BJ (cell line): ENCODE measurements at regions of chr20 and their contacts with region 1.

Region 1: DNA sequence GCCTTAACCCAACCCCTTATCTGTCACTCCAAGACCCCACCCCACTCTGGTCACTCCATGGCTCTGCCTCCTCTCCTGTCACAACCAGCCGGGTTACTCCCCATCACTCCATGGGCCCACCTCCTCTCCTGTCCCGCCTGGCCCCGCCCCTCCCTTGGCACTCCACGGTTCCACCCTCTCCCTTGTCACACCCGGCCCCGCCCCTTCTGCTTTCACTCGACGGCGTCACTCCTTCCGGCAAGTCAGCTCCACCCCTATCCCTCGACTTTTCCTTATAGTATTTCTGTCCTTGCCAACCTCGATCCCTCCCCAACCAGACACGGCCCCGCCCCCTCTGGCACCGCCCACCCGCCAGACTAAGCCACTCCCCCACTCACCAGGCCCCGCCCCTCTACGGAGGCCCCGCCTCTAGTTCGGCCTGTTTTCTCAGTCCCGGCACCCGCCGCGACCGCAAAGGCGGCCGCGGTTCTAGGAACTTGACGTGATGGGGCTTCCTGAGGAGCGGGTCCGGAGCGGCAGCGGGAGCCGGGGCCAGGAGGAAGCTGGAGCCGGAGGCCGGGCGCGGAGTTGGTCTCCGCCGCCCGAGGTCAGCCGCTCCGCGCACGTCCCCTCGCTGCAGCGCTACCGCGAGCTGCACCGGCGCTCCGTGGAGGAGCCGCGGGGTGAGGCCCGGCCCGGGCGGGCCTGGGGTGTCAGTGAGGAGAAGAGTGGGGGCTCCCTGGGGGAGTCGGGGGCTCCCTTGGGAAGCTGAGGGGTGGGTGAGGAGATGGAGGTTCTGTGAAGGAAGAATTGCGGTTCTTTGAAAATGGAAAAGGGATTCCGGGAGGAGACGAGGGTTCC is at the start of gene ACSS2:
- DNase-seq: peak; percentile 86
- H3K4me3 ChIP-seq: peak within 1 kb of the TSS; percentile 78
- H3K27me3 ChIP-seq: no peaks in the 10 kb centered on the region
- CTCF ChIP-seq: no peak
- polyA plus RNA-seq, gene ACSS2: 29.3 and 32.1 TPM in 2 replicates

Region 2: DNA sequence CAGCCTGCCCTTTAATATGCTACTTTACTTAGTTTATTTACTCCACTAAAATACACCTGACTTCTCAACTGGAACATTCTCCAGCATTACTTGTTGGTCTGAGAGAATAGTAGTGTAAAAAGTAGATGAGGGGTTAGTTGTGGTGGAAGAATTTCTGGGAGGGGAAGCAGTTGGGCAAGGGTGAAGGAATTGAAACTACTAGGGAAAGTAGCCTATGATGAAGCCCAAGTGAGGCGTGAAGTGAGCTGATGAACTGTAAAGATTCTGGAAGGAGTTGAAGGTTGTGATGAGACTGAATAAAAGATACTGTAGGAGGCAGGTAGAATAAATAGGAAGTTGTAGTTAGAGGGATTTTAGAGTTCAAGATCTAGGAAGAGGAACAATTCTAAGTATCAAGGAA is 440.8 kb before region 1 on chr20:
- CTCF ChIA-PET with region 1: no interaction called
- POLR2A ChIA-PET with region 1: no interaction called
- DNase-seq: no peak
- H3K4me3 ChIP-seq: no peak overlapping the region
- H3K27me3 ChIP-seq: no peaks in the 10 kb centered on the region
- CTCF ChIP-seq: no peak

Region 3: GRCh38 chr20:34797012-34797995 is 79.1 kb before region 1 on chr20:
- CTCF ChIA-PET with region 1: no interaction called
- POLR2A ChIA-PET with region 1: no interaction called
- DNase-seq: no peak
- H3K4me3 ChIP-seq: no peak overlapping the region
- H3K27me3 ChIP-seq: no peaks in the 10 kb centered on the region
- CTCF ChIP-seq: no peak

Region 4: DNA sequence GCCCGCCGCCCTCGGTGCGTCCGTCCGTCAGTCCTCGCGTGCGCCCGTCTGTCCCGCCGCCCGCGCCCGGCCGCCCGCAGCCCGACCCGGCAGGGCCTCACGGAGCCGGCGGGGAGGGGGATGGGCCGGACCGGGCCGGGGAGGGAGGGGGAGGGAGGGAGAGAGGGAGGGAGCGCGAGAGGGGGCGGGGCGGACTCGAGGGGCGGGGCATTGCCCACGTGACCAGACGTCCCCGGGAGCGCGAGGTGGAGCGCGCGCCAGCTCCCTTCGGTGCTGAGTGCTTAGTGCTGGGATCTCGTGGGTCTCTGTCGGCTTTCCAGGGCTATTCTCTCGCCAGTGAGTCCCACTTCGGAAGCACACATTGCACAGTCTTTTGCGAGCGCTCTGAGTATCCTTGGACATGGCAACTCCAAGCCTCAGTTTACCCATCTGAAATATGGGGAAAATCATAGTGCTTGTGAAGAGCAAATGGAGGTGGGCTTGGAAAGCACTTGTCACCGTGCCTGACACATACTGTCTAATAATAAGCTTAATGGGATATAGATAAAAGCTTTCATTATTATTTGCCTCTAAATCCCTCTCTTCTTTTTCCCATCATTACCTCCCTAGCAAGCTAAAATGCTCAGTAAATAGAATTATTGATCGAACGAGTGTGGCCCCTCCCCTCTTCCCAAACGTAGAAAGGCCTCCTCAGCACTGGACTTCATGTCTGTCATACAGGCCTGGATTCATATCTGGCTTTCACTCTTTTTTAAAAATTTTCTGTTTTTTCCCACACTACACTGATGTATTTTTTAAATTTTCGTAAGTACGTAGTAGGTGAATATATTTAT is 50.6 kb before region 1 on chr20 and contains the start of gene NCOA6:
- CTCF ChIA-PET with region 1: no interaction called
- POLR2A ChIA-PET with region 1: interaction called, 23 read pairs
- DNase-seq: no peak
- H3K4me3 ChIP-seq: peak within 1 kb of the TSS; percentile 83
- H3K27me3 ChIP-seq: no peaks in the 10 kb centered on the region
- CTCF ChIP-seq: no peak
- polyA plus RNA-seq, gene NCOA6: 12.5 and 14.0 TPM in 2 replicates

Region 5: DNA sequence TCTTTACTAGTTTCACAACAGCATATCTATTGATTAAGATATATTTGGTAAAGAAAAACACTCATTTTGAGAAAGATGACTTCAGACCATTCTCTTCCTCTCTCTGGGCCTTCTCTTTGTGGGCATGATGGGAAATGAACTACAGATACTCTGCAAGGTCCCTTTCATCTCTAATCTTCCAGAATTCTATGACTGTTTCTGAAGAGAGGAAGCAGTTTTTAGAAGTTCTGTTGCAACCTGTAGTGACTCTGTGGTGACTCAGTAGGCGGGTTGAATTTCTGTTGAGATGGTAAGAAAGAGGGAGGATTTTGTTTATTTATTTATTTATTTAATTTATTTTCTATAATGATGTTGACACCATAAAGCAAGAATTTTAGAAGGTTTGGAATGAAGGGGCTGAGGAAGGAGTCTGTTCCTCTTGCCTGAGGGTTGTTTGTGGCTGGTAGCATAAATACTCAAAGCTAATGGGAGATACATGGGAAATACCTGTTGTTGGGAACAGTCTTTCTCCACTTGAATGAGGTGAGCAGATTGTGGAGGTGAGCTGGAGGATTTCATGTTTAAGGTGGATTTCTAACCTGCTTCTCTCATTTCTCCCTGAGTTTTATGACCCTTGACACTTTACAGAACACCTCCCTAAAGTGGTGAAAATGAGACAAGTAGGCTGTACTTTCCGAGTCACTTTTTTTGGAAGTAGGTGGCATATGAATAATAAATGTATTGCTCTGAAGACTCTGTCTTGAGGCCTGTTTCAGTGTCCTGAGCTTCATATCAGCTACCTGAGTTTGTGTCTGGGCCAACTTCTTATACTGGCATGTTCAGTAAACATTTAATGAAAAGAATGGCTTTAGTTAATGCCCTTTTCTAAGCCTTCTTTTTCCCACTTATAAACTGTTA is 15.0 kb after region 1 on chr20:
- CTCF ChIA-PET with region 1: interaction called, 6 read pairs
- POLR2A ChIA-PET with region 1: interaction called, 32 read pairs
- DNase-seq: peak; percentile 51
- H3K4me3 ChIP-seq: no peak overlapping the region
- H3K27me3 ChIP-seq: no peaks in the 10 kb centered on the region
- CTCF ChIP-seq: no peak

Region 6: GRCh38 chr20:34955232-34956040 is 79.1 kb after region 1 on chr20 and contains the starts of genes GSS and MYH7B:
- CTCF ChIA-PET with region 1: interaction called, 61 read pairs
- POLR2A ChIA-PET with region 1: no interaction called
- DNase-seq: peak; percentile 68
- H3K4me3 ChIP-seq: peak within 1 kb of the TSS; percentile 82
- H3K27me3 ChIP-seq: no peaks in the 10 kb centered on the region
- CTCF ChIP-seq: peak; percentile 62
- polyA plus RNA-seq, gene GSS: 85.9 and 110 TPM in 2 replicates
- polyA plus RNA-seq, gene MYH7B: 0.01 and 0.05 TPM in 2 replicates

Region 7: DNA sequence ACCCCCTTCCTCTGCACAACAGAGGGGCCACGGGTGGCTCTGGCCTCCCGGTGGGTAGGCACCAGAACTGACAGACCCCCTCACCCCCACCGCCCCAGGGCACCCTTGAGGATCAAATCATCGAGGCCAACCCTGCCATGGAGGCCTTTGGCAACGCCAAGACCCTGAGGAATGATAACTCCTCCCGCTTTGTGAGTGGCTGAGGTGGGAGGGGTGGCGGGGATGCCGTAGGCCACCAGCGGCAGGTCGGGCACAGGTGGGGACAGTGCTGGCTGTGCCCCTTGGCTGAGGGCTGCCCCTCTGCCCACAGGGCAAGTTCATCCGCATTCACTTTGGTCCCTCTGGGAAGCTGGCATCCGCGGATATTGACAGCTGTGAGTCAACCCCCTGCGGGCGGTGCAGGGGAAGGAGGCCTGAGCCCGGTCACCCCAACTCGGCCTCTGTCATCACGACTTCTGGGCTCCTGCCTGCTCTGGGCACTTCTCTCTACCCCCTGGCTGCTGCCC is 108.4 kb after region 1 on chr20:
- CTCF ChIA-PET with region 1: interaction called, 14 read pairs
- POLR2A ChIA-PET with region 1: no interaction called
- DNase-seq: no peak
- H3K4me3 ChIP-seq: no peak overlapping the region
- H3K27me3 ChIP-seq: peaks cover 6% of the 10 kb centered on the region
- CTCF ChIP-seq: no peak

Region 8: GRCh38 chr20:35269055-35269781 is 392.8 kb after region 1 on chr20:
- CTCF ChIA-PET with region 1: interaction called, 4 read pairs
- POLR2A ChIA-PET with region 1: interaction called, 26 read pairs
- DNase-seq: no peak
- H3K4me3 ChIP-seq: no peak overlapping the region
- H3K27me3 ChIP-seq: no peaks in the 10 kb centered on the region
- CTCF ChIP-seq: peak; percentile 89